ENCODE measurements at regions of chr20 and their contacts with region 1.

Region 1: DNA sequence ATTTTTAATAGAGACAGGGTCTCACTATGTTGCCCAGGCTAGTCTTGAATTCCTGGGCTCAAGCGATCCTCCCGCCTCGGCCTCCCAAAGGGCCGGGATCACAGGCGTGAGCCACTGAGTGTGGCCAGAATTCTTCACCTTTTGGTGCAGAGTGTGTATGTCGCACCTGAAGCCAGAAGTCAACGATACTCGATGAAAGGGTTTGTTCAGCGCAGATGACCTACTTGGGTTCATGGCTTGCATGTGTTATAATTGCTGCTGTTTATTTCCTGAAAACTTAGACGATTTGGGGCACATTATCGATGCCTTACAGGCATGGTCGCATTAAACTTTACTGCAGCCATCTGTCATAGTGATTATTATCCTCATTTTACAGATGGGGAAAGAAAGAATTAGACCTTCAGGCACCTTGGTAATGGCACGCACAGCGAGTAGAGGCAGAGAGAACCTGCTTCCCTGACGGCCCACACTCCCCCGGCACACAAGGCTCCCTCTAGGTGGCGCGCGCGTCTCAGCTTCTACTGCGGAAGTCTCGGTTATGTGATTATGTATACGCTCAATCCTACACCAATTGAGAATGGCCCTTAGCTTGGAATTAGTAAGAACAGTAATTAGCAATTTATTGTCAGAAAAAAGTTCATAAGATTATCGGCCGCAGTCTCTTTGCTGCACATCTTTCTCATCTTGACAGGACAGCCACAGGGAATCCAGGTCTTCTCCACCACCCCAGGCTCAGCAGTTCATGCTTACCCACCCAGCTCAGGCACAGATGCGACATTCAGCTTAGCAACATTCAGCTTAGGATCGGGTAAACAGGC is 212.8 kb upstream of the PROKR2 start:
- DNase-seq: peak; percentile 40 to 63
- ATAC-seq: peak; percentile 73 to 77
- H3K4me3 ChIP-seq: peak overlapping the region in 1 of 4 donors; percentile 29
- H3K27ac ChIP-seq: no peak overlapping the region
- H3K4me1 ChIP-seq: peaks cover 0 to 8% of the 10 kb centered on the region in 2 donors
- H3K27me3 ChIP-seq: no peaks in the 10 kb centered on the region
- CTCF ChIP-seq: peak; percentile 29 to 73 (median 52)
- POLR2A ChIP-seq: no peak

Region 2: DNA sequence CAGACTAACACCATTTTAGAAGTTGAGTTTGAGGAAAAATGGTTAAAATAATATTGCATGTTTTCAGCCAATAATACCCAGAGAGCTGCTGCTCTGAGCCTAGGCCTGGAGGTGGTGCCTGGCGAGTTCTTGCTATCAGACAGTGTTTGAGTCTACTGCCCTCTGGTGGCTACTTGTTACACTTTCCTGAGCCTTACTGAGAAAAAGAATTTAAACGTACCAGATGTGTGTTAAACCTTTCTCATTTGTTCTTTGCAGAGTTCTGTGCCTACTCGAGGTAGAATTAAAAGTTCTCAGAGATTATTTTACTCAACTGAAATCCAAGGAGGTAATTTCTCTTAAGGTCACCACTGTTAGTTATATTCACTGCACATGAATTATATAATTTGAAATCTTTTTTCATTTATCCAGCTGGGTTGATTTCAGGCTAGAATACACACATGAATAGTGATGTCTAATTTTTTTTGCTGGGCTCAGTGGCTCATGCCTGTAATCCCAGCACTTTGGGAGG is 258.9 kb after region 1 on chr20:
- in situ Hi-C with region 1: loop called in 3 of 4 experiments (anchors 10 kb)
- intact Hi-C with region 1: loop called (anchors 1 kb)
- DNase-seq: peak; percentile 74 to 75
- ATAC-seq: peak; percentile 76 to 84
- H3K4me3 ChIP-seq: no peak overlapping the region
- H3K27ac ChIP-seq: no peak overlapping the region
- H3K4me1 ChIP-seq: peaks cover 16 to 24% of the 10 kb centered on the region in 2 donors
- H3K27me3 ChIP-seq: no peaks in the 10 kb centered on the region
- CTCF ChIP-seq: peak; percentile 86 to 93 (median 89)
- POLR2A ChIP-seq: no peak

Region 3: GRCh38 chr20:5933802-5934436 is 404.4 kb after region 1 on chr20:
- in situ Hi-C with region 1: loop called in 2 of 4 experiments (anchors 25 kb)
- intact Hi-C with region 1: no loop called
- DNase-seq: no peak
- ATAC-seq: peak; percentile 64 to 75
- H3K4me3 ChIP-seq: no peak overlapping the region
- H3K27ac ChIP-seq: no peak overlapping the region
- H3K4me1 ChIP-seq: no peaks in the 10 kb centered on the region
- H3K27me3 ChIP-seq: no peaks in the 10 kb centered on the region
- CTCF ChIP-seq: peak in 4 of 5 experiments; percentile 21 to 38 (median 28)
- POLR2A ChIP-seq: no peak

Region 4: GRCh38 chr20:6000871-6001270 is 471.3 kb after region 1 on chr20:
- in situ Hi-C with region 1: no loop called
- intact Hi-C with region 1: loop called (anchors 5 kb)
- DNase-seq: no peak
- ATAC-seq: no peak
- H3K4me3 ChIP-seq: no peak overlapping the region
- H3K27ac ChIP-seq: no peak overlapping the region
- H3K4me1 ChIP-seq: peaks cover 4 to 7% of the 10 kb centered on the region in 2 donors
- H3K27me3 ChIP-seq: no peaks in the 10 kb centered on the region
- CTCF ChIP-seq: no peak
- POLR2A ChIP-seq: no peak

Region 5: DNA sequence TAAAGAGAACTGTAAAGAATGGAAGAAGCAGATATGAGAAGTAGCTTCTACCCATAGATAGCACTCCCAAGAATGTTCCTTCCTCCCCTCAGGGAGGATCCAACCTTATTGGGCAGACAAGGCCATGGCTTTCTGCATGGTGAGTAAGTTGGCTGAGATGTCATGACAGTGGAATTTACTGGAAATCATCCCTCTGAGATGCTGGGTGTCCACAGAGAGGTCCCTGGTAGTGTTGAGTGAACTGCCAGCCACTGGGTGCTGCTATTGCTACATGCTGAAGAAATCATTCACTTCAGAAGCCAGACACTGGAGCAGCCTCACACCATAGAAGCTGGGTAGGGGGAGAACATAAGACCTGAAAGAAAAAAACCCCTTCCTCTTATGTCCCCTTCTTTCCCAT is 639.7 kb after region 1 on chr20:
- in situ Hi-C with region 1: no loop called
- intact Hi-C with region 1: no loop called
- DNase-seq: no peak
- ATAC-seq: no peak
- H3K4me3 ChIP-seq: no peak overlapping the region
- H3K27ac ChIP-seq: no peak overlapping the region
- H3K4me1 ChIP-seq: peaks cover 0 to 8% of the 10 kb centered on the region in 2 donors
- H3K27me3 ChIP-seq: no peaks in the 10 kb centered on the region
- CTCF ChIP-seq: no peak
- POLR2A ChIP-seq: no peak

Measured in gastrocnemius medialis (tissue), 4 donors.